ENCODE measurements at regions of chr2 and their contacts with region 1.

Region 1: DNA sequence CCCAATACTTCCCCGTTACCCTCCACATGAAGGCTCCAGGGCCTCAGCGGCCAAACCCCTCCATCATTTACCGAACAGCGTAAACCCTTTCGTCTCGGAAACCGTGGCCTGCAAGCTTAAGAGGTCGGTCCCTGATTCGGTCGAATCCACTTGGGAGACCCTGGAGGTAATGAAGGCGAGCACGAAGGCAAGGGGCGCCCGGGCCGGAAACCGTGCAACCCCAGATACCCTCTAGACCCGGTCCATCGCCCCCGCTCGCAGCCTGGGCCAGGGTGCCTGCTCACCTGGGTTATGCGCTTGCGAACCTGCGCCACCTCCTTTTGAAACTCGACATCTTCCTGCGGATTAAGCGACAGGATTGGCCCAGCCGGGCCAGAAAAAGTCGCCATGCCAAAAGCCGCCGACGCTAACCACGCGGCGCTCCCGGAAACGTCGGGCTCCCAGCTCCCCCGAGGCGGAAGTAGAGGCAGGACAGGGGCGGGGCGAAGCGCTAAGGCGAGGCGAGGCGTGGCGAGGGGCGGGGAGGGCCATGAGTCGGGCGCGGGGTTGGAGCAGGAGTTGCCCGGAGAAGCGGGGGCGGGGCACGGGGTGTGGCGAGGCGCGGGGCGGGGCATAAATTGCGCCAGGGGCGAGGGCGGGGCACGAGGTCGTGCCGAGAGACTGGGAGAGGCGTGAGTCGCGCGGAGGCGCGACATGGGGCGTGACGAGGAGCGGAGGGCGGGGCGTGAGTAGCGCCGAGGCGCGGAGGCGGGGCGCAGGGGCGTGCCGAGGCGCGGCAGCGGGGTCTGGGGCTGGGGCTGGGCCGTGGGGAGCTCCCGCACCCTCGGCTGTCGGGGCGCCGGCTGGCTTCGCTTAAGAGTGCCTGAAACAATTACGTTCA is at the start of gene NIFK:
- DNase-seq: peak; percentile 99 to 100
- H3K4me3 ChIP-seq: peak within 1 kb of the TSS; percentile 82
- H3K4me3 Mint-ChIP-seq: peak within 1 kb of the TSS; percentile 98
- H3K27ac Mint-ChIP-seq: peak within 1 kb of the TSS; percentile 96
- H3K4me1 ChIP-seq: peaks cover 14% of the 10 kb centered on the region
- H3K4me1 Mint-ChIP-seq: peaks cover 15% of the 10 kb centered on the region
- H3K27me3 ChIP-seq: no peaks in the 10 kb centered on the region
- H3K27me3 Mint-ChIP-seq: no peaks in the 10 kb centered on the region
- CTCF ChIP-seq: no peak
- total RNA-seq, gene NIFK: 84.7 and 104 TPM in 2 replicates

Region 2: GRCh38 chr2:121429119-121429903 is 307.4 kb before region 1 on chr2:
- CTCF ChIA-PET with region 1: no interaction called
- POLR2A ChIA-PET with region 1: interaction called, 11 read pairs
- intact Hi-C with region 1: no loop called
- DNase-seq: peak; percentile 30 to 43
- H3K4me3 ChIP-seq: no peak overlapping the region
- H3K4me3 Mint-ChIP-seq: peak overlapping the region; percentile 54
- H3K27ac Mint-ChIP-seq: peak overlapping the region; percentile 78
- H3K4me1 ChIP-seq: peaks cover 30% of the 10 kb centered on the region
- H3K4me1 Mint-ChIP-seq: peaks cover 18% of the 10 kb centered on the region
- H3K27me3 ChIP-seq: no peaks in the 10 kb centered on the region
- H3K27me3 Mint-ChIP-seq: no peaks in the 10 kb centered on the region
- CTCF ChIP-seq: no peak

Region 3: GRCh38 chr2:121446647-121447241 is 290.0 kb before region 1 on chr2:
- CTCF ChIA-PET with region 1: no interaction called
- POLR2A ChIA-PET with region 1: no interaction called
- intact Hi-C with region 1: no loop called
- DNase-seq: no peak
- H3K4me3 ChIP-seq: no peak overlapping the region
- H3K4me3 Mint-ChIP-seq: no peak overlapping the region
- H3K27ac Mint-ChIP-seq: no peak overlapping the region
- H3K4me1 ChIP-seq: no peaks in the 10 kb centered on the region
- H3K4me1 Mint-ChIP-seq: peaks cover 6% of the 10 kb centered on the region
- H3K27me3 ChIP-seq: no peaks in the 10 kb centered on the region
- H3K27me3 Mint-ChIP-seq: no peaks in the 10 kb centered on the region
- CTCF ChIP-seq: no peak

Region 4: GRCh38 chr2:121755236-121756111 is 18.8 kb after region 1 on chr2 and contains the start of gene TSN:
- CTCF ChIA-PET with region 1: no interaction called
- POLR2A ChIA-PET with region 1: interaction called, 7 read pairs
- intact Hi-C with region 1: loop called (anchors 1 kb)
- DNase-seq: peak; percentile 98
- H3K4me3 ChIP-seq: peak within 1 kb of the TSS; percentile 90
- H3K4me3 Mint-ChIP-seq: peak within 1 kb of the TSS; percentile 77
- H3K27ac Mint-ChIP-seq: peak within 1 kb of the TSS; percentile 82
- H3K4me1 ChIP-seq: peaks cover 7% of the 10 kb centered on the region; the same call in 1 of the 2 replicates
- H3K4me1 Mint-ChIP-seq: peaks cover 5% of the 10 kb centered on the region
- H3K27me3 ChIP-seq: no peaks in the 10 kb centered on the region
- H3K27me3 Mint-ChIP-seq: no peaks in the 10 kb centered on the region
- CTCF ChIP-seq: no peak
- total RNA-seq, gene TSN: 125 and 136 TPM in 2 replicates

Region 5: DNA sequence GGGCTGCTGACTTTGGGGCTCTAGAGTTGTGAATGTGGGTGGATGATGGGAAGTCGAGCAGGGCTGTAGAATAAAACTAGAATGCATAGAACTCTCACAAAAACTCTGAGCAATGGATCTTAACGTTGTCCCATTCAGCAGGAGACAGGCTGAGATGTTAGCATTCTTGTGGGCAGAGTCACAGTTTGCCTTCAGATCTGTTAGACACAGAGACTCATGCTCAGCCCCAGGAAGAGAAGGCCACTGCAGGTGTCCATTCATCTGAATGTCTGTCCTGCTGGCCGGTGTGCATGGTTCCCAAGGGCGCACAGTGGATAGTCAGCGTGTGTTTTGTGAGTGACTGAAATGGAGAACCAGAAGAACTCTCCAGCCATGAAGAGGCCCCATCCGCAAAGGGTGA is 130.1 kb after region 1 on chr2:
- CTCF ChIA-PET with region 1: no interaction called
- POLR2A ChIA-PET with region 1: no interaction called
- intact Hi-C with region 1: no loop called
- DNase-seq: no peak
- H3K4me3 ChIP-seq: no peak overlapping the region
- H3K4me3 Mint-ChIP-seq: no peak overlapping the region
- H3K27ac Mint-ChIP-seq: no peak overlapping the region
- H3K4me1 ChIP-seq: no peaks in the 10 kb centered on the region
- H3K4me1 Mint-ChIP-seq: no peaks in the 10 kb centered on the region
- H3K27me3 ChIP-seq: peaks cover 2% of the 10 kb centered on the region
- H3K27me3 Mint-ChIP-seq: peaks cover 7% of the 10 kb centered on the region
- CTCF ChIP-seq: no peak